Esophagus muscularis mucosa (tissue), 4 donors: ENCODE measurements at regions of chr14 and their contacts with region 1.

Region 1: DNA sequence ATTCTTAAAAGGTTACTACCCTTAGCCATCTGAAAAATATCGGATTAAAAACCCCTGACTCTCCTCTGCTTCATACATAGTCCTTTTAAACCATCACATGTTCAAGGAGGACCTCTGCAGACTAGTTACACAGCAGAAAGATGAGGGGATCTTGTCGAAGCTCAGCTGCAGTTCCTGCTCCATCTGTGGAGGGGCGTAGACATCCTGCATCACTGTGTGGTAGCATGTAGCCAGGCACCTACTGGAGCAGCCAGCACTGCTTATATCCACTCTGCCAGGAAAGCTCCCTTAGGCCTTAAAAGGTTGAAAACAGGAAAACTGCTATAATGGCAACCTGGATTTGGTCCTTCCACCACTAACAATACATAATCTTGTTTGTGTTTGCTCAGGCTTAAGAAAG is 57.6 kb upstream of the STRN3 start:
- DNase-seq: no peak
- H3K4me3 ChIP-seq: no peak overlapping the region
- H3K27ac ChIP-seq: peak overlapping the region; percentile 17 to 77 (median 50)
- H3K4me1 ChIP-seq: peaks cover 4 to 30% (median 23%) of the 10 kb centered on the region in 4 donors
- H3K27me3 ChIP-seq: no peaks in the 10 kb centered on the region
- CTCF ChIP-seq: no peak
- EP300 ChIP-seq: no peak
- POLR2A ChIP-seq: no peak

Region 2: DNA sequence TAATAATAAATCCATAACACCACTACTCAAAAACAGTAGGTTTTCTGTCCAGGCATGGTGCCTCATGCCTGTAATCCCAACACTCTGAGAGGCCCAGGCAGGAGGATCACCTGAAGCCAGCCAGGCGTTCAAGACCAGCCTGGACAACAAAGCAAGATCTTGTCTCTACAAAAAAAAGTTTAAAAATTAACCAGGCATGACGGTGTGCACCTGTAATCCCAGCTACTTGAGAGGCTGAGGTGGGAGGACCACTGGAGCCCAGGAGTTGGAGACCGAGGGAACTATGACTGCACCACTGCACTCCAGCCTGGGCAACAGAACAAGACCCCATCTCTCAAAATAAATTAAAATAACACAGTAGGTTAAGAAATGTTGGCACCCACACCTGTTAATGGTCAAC is 102.8 kb before region 1 on chr14:
- intact Hi-C with region 1: loop called (anchors 2 kb)
- DNase-seq: no peak
- H3K4me3 ChIP-seq: no peak overlapping the region
- H3K27ac ChIP-seq: peak overlapping the region in 3 of 4 donors; percentile 1 to 3 (median 2)
- H3K4me1 ChIP-seq: peaks cover 0 to 72% (median 71%) of the 10 kb centered on the region in 4 donors
- H3K27me3 ChIP-seq: no peaks in the 10 kb centered on the region
- CTCF ChIP-seq: no peak
- EP300 ChIP-seq: no peak
- POLR2A ChIP-seq: no peak

Region 3: GRCh38 chr14:31000629-31001338 is 83.0 kb before region 1 on chr14:
- intact Hi-C with region 1: no loop called
- DNase-seq: no peak
- H3K4me3 ChIP-seq: no peak overlapping the region
- H3K27ac ChIP-seq: no peak overlapping the region
- H3K4me1 ChIP-seq: peaks cover 7 to 33% (median 26%) of the 10 kb centered on the region in 4 donors
- H3K27me3 ChIP-seq: no peaks in the 10 kb centered on the region
- CTCF ChIP-seq: no peak
- EP300 ChIP-seq: no peak
- POLR2A ChIP-seq: no peak